HepG2 (cell line): ENCODE measurements at regions of chr1 and their contacts with region 1.

Region 1: DNA sequence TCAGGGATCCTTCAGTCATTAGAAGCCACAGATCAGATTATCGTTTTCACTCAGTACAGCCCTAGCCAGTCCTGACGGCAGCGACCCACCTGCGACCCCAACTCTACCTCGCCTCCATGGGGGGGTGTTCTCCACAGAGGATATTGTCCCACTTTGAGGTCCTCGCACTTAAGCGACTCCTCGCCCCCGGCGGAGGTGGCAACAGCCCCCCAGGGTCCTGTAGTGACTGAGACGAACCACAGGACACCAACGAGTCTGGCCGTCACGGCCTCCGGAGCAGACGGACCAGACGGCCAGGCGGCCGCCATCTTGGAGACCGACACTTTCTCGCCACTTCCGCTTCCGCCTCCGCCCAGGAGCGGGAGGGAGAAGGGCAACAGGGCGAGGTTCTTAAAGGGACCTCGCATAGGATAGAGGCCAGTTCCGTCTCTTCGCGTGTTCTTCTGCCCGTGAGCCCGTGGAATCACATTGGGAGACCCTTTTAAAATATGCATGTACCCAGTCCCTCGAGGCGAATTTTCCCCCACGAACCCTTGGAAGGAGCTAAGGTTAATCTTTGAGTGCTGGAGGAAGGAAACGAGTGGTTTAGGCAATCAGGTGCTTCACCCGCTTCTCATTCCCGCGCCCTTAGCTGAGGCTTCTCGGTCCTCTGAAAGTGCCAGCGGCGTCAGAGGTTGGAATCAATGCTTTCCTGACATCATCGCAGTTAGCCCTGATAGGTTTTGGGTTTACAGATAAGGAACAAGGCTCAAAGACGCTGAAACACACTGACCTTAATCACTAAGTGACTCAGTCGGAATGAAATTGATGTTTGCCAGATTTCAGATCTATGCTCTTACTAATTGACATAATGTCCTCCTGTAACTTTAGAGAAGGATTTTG is at the start of gene TM2D1:
- DNase-seq: peak; percentile 82
- ATAC-seq: peak; percentile 100
- H3K4me3 ChIP-seq: peak within 1 kb of the TSS; percentile 87 to 96 (median 94)
- H3K27ac ChIP-seq: peak within 1 kb of the TSS; percentile 74
- H3K4me1 ChIP-seq: peaks cover 30% of the 10 kb centered on the region
- H3K27me3 ChIP-seq: no peaks in the 10 kb centered on the region; a peak in 1 of 5 replicates
- CTCF ChIP-seq: peak; percentile 24; the same call in 1 of the 2 replicates
- EP300 ChIP-seq: no peak
- POLR2A ChIP-seq: peak; percentile 96 to 99
- RAD21 ChIP-seq: no peak
- total RNA-seq, gene TM2D1: 13.6 and 26.6 TPM in 2 replicates

Region 2: GRCh38 chr1:61472876-61473275 is 252.2 kb before region 1 on chr1:
- CTCF ChIA-PET with region 1: no interaction called
- POLR2A ChIA-PET with region 1: no interaction called
- in situ Hi-C with region 1: no loop called
- intact Hi-C with region 1: no loop called
- DNase-seq: no peak
- ATAC-seq: no peak
- H3K4me3 ChIP-seq: no peak overlapping the region
- H3K27ac ChIP-seq: no peak overlapping the region
- H3K4me1 ChIP-seq: no peaks in the 10 kb centered on the region
- H3K27me3 ChIP-seq: peaks cover 1 to 6% of the 10 kb centered on the region in 2 experiments; a peak in 2 of 5 replicates
- CTCF ChIP-seq: no peak
- EP300 ChIP-seq: no peak
- POLR2A ChIP-seq: no peak
- RAD21 ChIP-seq: no peak

Region 3: DNA sequence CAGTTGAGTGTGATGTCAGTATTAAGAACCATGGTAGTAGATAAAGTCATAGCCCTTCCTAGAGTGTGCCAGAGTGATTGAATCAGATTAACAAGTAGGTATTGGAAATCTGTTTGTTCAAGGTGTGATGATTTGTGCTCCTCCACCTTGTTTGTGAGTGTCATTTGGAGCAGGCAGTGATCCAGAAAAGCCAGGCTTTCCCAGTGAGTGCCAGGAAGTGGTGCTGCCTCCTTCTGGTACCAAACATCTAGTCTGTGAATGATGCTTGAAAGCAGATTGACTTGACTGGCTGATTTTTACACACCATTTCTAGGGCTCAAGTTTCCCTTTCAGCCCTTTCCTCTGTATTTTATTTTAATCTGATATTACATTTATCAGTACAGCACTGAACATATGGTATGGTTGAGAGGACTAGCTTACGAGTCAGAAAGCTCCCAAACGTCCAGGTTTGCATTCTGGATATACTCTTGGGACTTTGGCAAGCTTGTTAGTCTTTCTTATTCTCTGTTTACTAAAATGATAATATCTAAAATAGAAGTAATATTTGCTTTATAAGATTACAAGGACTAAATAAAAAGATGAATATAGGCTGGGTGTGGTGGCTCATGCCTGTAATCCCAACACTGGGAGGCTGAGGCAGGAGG is 117.9 kb after region 1 on chr1:
- CTCF ChIA-PET with region 1: no interaction called
- POLR2A ChIA-PET with region 1: no interaction called
- in situ Hi-C with region 1: no loop called
- intact Hi-C with region 1: loop called (anchors 10 kb)
- DNase-seq: no peak
- ATAC-seq: 0 out of 3 replicates have a peak, but pooled peaks have one; percentile 38
- H3K4me3 ChIP-seq: no peak overlapping the region
- H3K27ac ChIP-seq: no peak overlapping the region
- H3K4me1 ChIP-seq: no peaks in the 10 kb centered on the region; the same call in 1 of the 2 replicates
- H3K27me3 ChIP-seq: no peaks in the 10 kb centered on the region
- CTCF ChIP-seq: peak; percentile 35; the same call in 1 of the 2 replicates
- EP300 ChIP-seq: no peak
- POLR2A ChIP-seq: no peak
- RAD21 ChIP-seq: no peak